CD8-positive, alpha-beta T cell (primary cell): ENCODE measurements at regions of chrX and their contacts with region 1.

Region 1: GRCh38 chrX:48801280-48802088 is at the start of gene HDAC6:
- DNase-seq: peak; percentile 85 to 98 (median 91)
- ATAC-seq: peak; percentile 85
- H3K4me3 ChIP-seq: peak within 1 kb of the TSS; percentile 67 to 89
- H3K4me3 Mint-ChIP-seq: peak within 1 kb of the TSS; percentile 94
- H3K27ac ChIP-seq: peak within 1 kb of the TSS; percentile 92 to 98
- H3K27ac Mint-ChIP-seq: peak within 1 kb of the TSS; percentile 99
- H3K4me1 ChIP-seq: peaks cover 13% of the 10 kb centered on the region
- H3K4me1 Mint-ChIP-seq: peaks cover 17% of the 10 kb centered on the region
- H3K27me3 ChIP-seq: no peaks in the 10 kb centered on the region
- H3K27me3 Mint-ChIP-seq: no peaks in the 10 kb centered on the region
- CTCF ChIP-seq: no peak
- total RNA-seq, gene HDAC6: 73.8 to 80.7 TPM

Region 2: GRCh38 chrX:48475774-48476577 is 325.5 kb before region 1 on chrX and contains the start of gene FTSJ1:
- CTCF ChIA-PET with region 1: no interaction called
- POLR2A ChIA-PET with region 1: no interaction called
- intact Hi-C with region 1: loop called in 1 of 2 experiments (anchors 5 kb)
- DNase-seq: peak; percentile 75 to 96 (median 87)
- ATAC-seq: peak; percentile 89
- H3K4me3 ChIP-seq: peak within 1 kb of the TSS; percentile 62 to 86
- H3K4me3 Mint-ChIP-seq: peak within 1 kb of the TSS; percentile 88
- H3K27ac ChIP-seq: peak within 1 kb of the TSS; percentile 85 to 88
- H3K27ac Mint-ChIP-seq: peak within 1 kb of the TSS; percentile 90
- H3K4me1 ChIP-seq: peaks cover 14% of the 10 kb centered on the region
- H3K4me1 Mint-ChIP-seq: peaks cover 30% of the 10 kb centered on the region
- H3K27me3 ChIP-seq: no peaks in the 10 kb centered on the region
- H3K27me3 Mint-ChIP-seq: no peaks in the 10 kb centered on the region
- CTCF ChIP-seq: no peak
- total RNA-seq, gene FTSJ1: 61.4 to 67.4 TPM

Region 3: GRCh38 chrX:48676106-48676892 is 125.2 kb before region 1 on chrX:
- CTCF ChIA-PET with region 1: no interaction called
- POLR2A ChIA-PET with region 1: no interaction called
- intact Hi-C with region 1: loop called (anchors 1 kb)
- DNase-seq: peak; percentile 73 to 93 (median 83)
- ATAC-seq: peak; percentile 94
- H3K4me3 ChIP-seq: peak overlapping the region; percentile 74 to 76
- H3K4me3 Mint-ChIP-seq: peak overlapping the region; percentile 92
- H3K27ac ChIP-seq: peak overlapping the region; percentile 78 to 86
- H3K27ac Mint-ChIP-seq: peak overlapping the region; percentile 93
- H3K4me1 ChIP-seq: peaks cover 6% of the 10 kb centered on the region
- H3K4me1 Mint-ChIP-seq: peaks cover 30% of the 10 kb centered on the region
- H3K27me3 ChIP-seq: no peaks in the 10 kb centered on the region
- H3K27me3 Mint-ChIP-seq: no peaks in the 10 kb centered on the region
- CTCF ChIP-seq: no peak

Region 4: DNA sequence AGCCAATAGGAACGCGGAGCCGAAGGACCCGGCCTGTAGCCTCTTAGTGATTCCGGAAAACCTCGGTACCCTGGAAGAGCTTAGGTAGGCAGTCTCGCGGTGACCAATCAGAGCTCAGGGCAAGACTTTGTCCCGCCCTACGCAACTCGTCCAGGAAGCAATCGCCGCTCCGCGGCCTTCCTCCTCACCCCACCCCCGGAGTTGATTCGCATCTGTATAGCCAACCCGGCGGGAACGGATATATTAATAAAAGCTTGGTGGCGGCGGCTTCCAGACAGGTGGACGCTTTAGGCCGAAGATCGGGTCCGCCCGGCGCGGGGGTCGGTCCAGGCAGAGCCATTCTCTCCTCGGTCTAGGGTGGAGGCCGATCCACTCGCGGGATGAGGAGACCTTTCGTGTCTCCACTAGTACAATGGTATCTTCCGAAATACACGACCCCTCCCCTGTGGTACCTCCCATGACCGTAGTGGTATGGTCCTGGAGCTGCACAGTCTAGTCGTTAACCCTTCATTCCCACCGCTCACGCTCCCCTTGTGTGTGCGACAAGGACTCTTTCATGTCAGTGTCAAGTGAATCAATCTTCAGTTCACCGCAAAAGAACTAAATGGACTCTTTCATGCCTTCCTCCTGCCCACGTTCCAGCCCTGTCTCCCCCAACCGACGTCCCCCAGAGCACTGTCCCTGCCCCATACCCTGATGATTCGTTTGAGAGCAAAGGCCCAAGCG is 64.1 kb before region 1 on chrX:
- CTCF ChIA-PET with region 1: no interaction called
- POLR2A ChIA-PET with region 1: interaction called, 16 read pairs
- intact Hi-C with region 1: loop called (anchors 1 to 2 kb)
- DNase-seq: peak; percentile 73 to 97 (median 82)
- ATAC-seq: peak; percentile 95
- H3K4me3 ChIP-seq: peak overlapping the region; percentile 68 to 75
- H3K4me3 Mint-ChIP-seq: peak overlapping the region; percentile 95
- H3K27ac ChIP-seq: peak overlapping the region; percentile 76 to 94
- H3K27ac Mint-ChIP-seq: peak overlapping the region; percentile 98
- H3K4me1 ChIP-seq: peaks cover 16% of the 10 kb centered on the region
- H3K4me1 Mint-ChIP-seq: peaks cover 15% of the 10 kb centered on the region
- H3K27me3 ChIP-seq: no peaks in the 10 kb centered on the region
- H3K27me3 Mint-ChIP-seq: no peaks in the 10 kb centered on the region
- CTCF ChIP-seq: no peak

Region 5: GRCh38 chrX:48917139-48918001 is 115.9 kb after region 1 on chrX:
- CTCF ChIA-PET with region 1: interaction called, 3 read pairs
- POLR2A ChIA-PET with region 1: no interaction called
- intact Hi-C with region 1: loop called in 1 of 2 experiments (anchors 5 kb)
- DNase-seq: peak; percentile 77 to 93 (median 88)
- ATAC-seq: peak; percentile 37
- H3K4me3 ChIP-seq: peak overlapping the region; percentile 92 to 95
- H3K4me3 Mint-ChIP-seq: peak overlapping the region; percentile 97
- H3K27ac ChIP-seq: peak overlapping the region; percentile 75 to 100
- H3K27ac Mint-ChIP-seq: peak overlapping the region; percentile 97
- H3K4me1 ChIP-seq: peaks cover 58% of the 10 kb centered on the region
- H3K4me1 Mint-ChIP-seq: peaks cover 56% of the 10 kb centered on the region
- H3K27me3 ChIP-seq: no peaks in the 10 kb centered on the region
- H3K27me3 Mint-ChIP-seq: no peaks in the 10 kb centered on the region
- CTCF ChIP-seq: peak; percentile 77

Region 6: DNA sequence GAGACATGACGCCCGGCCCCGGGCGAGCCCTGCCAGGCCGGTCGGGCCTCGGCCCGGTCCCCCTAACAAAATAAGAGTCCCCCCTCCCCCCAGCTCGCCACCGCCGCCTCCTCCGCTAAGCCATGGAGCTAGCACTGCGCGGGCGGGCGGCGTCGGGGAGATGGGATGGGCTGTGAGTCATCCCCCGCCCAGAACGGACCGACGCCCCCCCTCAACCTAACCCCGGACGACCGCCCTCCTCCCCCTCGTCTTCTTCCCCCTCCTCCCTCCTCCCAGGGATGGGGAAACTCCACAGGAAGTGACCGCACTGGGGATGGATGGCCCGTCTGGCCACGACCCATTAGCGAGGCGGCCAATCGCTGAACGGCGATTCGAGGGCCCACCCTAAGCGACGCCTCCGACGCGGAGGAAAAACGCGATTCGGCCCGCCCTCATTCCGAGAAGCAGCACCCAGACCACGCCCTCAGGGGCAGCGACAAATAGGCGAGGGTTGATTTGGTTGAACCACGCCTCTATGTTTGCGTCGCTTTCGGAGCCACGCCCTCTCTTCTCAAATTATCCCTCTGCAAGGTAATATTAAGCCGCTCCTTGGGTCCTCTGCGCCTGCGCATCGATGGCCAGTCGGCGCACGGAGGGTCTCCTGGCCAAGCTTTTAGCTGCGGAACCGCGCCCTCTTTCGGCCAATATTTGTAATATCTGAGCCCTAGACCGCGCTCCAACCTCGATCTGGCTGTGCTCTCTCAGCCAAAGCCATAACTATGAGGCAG is 241.9 kb after region 1 on chrX and contains the start of gene TFE3:
- CTCF ChIA-PET with region 1: no interaction called
- POLR2A ChIA-PET with region 1: no interaction called
- intact Hi-C with region 1: loop called in 1 of 2 experiments (anchors 2 kb)
- DNase-seq: peak; percentile 88 to 98 (median 93)
- ATAC-seq: peak; percentile 89
- H3K4me3 ChIP-seq: peak within 1 kb of the TSS; percentile 50 to 56
- H3K4me3 Mint-ChIP-seq: peak within 1 kb of the TSS; percentile 84
- H3K27ac ChIP-seq: peak within 1 kb of the TSS; percentile 73 to 92
- H3K27ac Mint-ChIP-seq: peak within 1 kb of the TSS; percentile 93
- H3K4me1 ChIP-seq: peaks cover 21% of the 10 kb centered on the region
- H3K4me1 Mint-ChIP-seq: peaks cover 35% of the 10 kb centered on the region
- H3K27me3 ChIP-seq: no peaks in the 10 kb centered on the region
- H3K27me3 Mint-ChIP-seq: no peaks in the 10 kb centered on the region
- CTCF ChIP-seq: no peak
- total RNA-seq, gene TFE3: 35.7 to 39.7 TPM